ENCODE measurements at regions of chr5 and their contacts with region 1.

Region 1: GRCh38 chr5:35777358-35778087 is 79.2 kb upstream of the IL7R start:
- DNase-seq: peak; percentile 50 to 90 (median 68)
- ATAC-seq: peak; percentile 63
- H3K4me3 ChIP-seq: peak overlapping the region; percentile 7
- H3K4me3 Mint-ChIP-seq: peak overlapping the region; percentile 77
- H3K27ac ChIP-seq: peak overlapping the region in 1 of 2 donors; percentile 19
- H3K27ac Mint-ChIP-seq: peak overlapping the region; percentile 84
- H3K4me1 ChIP-seq: peaks cover 32% of the 10 kb centered on the region
- H3K4me1 Mint-ChIP-seq: peaks cover 74% of the 10 kb centered on the region
- H3K27me3 ChIP-seq: no peaks in the 10 kb centered on the region
- H3K27me3 Mint-ChIP-seq: no peaks in the 10 kb centered on the region
- CTCF ChIP-seq: peak; percentile 87

Region 2: DNA sequence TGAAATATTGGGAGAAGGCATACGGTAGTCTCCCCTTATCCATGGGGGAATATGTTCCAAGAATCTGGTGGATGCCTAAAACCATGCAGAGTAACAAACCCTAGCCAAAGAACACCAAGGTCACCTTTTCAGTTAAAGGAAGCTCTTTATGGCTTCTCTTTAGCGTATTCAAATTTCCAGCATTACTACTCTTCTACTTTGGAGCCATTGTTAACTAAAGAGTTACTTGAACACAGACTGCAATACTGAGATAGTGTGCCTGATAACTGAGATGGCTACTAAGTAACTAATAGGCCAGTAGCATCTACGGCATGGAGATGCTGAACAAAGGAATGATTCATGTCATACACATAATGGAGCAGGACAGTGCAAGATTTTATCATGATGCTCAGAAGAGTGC is 244.4 kb before region 1 on chr5:
- CTCF ChIA-PET with region 1: no interaction called
- POLR2A ChIA-PET with region 1: no interaction called
- intact Hi-C with region 1: no loop called
- DNase-seq: no peak
- ATAC-seq: no peak
- H3K4me3 ChIP-seq: no peak overlapping the region
- H3K4me3 Mint-ChIP-seq: no peak overlapping the region
- H3K27ac ChIP-seq: no peak overlapping the region
- H3K27ac Mint-ChIP-seq: no peak overlapping the region
- H3K4me1 ChIP-seq: no peaks in the 10 kb centered on the region
- H3K4me1 Mint-ChIP-seq: no peaks in the 10 kb centered on the region
- H3K27me3 ChIP-seq: no peaks in the 10 kb centered on the region
- H3K27me3 Mint-ChIP-seq: peaks cover 6% of the 10 kb centered on the region
- CTCF ChIP-seq: no peak

Region 3: GRCh38 chr5:35627616-35628015 is 149.9 kb before region 1 on chr5:
- CTCF ChIA-PET with region 1: no interaction called
- POLR2A ChIA-PET with region 1: no interaction called
- intact Hi-C with region 1: no loop called
- DNase-seq: no peak
- ATAC-seq: no peak
- H3K4me3 ChIP-seq: no peak overlapping the region
- H3K4me3 Mint-ChIP-seq: no peak overlapping the region
- H3K27ac ChIP-seq: no peak overlapping the region
- H3K27ac Mint-ChIP-seq: no peak overlapping the region
- H3K4me1 ChIP-seq: no peaks in the 10 kb centered on the region
- H3K4me1 Mint-ChIP-seq: peaks cover 5% of the 10 kb centered on the region
- H3K27me3 ChIP-seq: no peaks in the 10 kb centered on the region
- H3K27me3 Mint-ChIP-seq: no peaks in the 10 kb centered on the region
- CTCF ChIP-seq: no peak

Region 4: GRCh38 chr5:35672995-35673394 is 104.5 kb before region 1 on chr5:
- CTCF ChIA-PET with region 1: interaction called, 3 read pairs
- POLR2A ChIA-PET with region 1: interaction called, 3 read pairs
- intact Hi-C with region 1: loop called in 1 of 2 experiments (anchors 5 kb)
- DNase-seq: peak in 12 of 14 experiments; percentile 3 to 70 (median 23)
- ATAC-seq: peak; percentile 74
- H3K4me3 ChIP-seq: no peak overlapping the region
- H3K4me3 Mint-ChIP-seq: peak overlapping the region; percentile 63
- H3K27ac ChIP-seq: peak overlapping the region in 1 of 2 donors; percentile 25
- H3K27ac Mint-ChIP-seq: peak overlapping the region; percentile 93
- H3K4me1 ChIP-seq: peaks cover 10% of the 10 kb centered on the region
- H3K4me1 Mint-ChIP-seq: peaks cover 78% of the 10 kb centered on the region
- H3K27me3 ChIP-seq: no peaks in the 10 kb centered on the region
- H3K27me3 Mint-ChIP-seq: no peaks in the 10 kb centered on the region
- CTCF ChIP-seq: no peak

Region 5: GRCh38 chr5:35717718-35718117 is 59.8 kb before region 1 on chr5:
- CTCF ChIA-PET with region 1: no interaction called
- POLR2A ChIA-PET with region 1: no interaction called
- intact Hi-C with region 1: no loop called
- DNase-seq: peak in 1 of 14 experiments; percentile 7
- ATAC-seq: no peak
- H3K4me3 ChIP-seq: no peak overlapping the region
- H3K4me3 Mint-ChIP-seq: no peak overlapping the region
- H3K27ac ChIP-seq: no peak overlapping the region
- H3K27ac Mint-ChIP-seq: no peak overlapping the region
- H3K4me1 ChIP-seq: no peaks in the 10 kb centered on the region
- H3K4me1 Mint-ChIP-seq: no peaks in the 10 kb centered on the region
- H3K27me3 ChIP-seq: no peaks in the 10 kb centered on the region
- H3K27me3 Mint-ChIP-seq: no peaks in the 10 kb centered on the region
- CTCF ChIP-seq: no peak

Region 6: DNA sequence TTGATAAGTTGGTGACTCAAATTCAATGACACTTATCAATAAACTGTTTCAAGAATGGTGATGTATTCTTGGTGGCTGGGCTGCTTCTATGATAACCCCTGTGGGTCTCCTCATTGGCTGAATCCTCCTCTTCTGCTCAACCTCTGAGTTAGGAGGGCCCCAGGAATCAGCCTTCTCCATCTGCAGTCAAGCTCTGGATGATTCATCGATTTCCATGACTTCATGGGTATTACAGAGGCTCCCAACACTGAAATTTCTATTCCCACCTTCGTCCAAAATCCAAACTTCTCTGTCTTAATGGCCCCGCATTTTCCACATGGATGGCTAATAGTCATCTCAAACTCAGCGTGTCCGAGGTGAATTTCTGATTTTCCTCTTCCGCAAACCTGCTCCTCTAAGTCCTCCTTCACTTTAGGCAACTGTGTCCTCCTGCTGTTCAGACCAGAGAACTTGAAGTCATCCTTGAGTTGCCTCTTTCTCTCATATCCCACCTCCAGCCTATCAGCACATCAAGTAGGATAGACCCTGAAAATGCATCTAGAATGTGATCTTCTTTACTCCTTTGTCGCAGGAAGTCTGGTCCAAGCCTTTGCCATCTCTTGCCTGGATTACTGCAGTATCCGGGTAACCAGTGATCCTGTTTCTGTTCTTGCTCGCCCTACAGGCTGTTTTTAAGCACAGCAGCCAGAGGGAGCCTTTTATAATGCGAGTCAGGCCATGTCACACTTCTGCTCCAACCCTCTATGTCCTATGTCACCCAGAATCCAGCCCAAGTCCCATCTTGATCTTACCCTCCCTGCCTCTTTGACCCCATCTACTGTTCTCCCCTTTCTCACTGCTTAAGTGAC is 37.8 kb after region 1 on chr5:
- CTCF ChIA-PET with region 1: interaction called, 20 read pairs
- POLR2A ChIA-PET with region 1: interaction called, 71 read pairs
- intact Hi-C with region 1: loop called in 1 of 2 experiments (anchors 5 kb)
- DNase-seq: peak in 4 of 14 experiments; percentile 47 to 75 (median 69)
- ATAC-seq: peak; percentile 27
- H3K4me3 ChIP-seq: no peak overlapping the region
- H3K4me3 Mint-ChIP-seq: no peak overlapping the region
- H3K27ac ChIP-seq: peak overlapping the region; percentile 8 to 59
- H3K27ac Mint-ChIP-seq: no peak overlapping the region
- H3K4me1 ChIP-seq: peaks cover 65% of the 10 kb centered on the region
- H3K4me1 Mint-ChIP-seq: peaks cover 39% of the 10 kb centered on the region
- H3K27me3 ChIP-seq: no peaks in the 10 kb centered on the region
- H3K27me3 Mint-ChIP-seq: no peaks in the 10 kb centered on the region
- CTCF ChIP-seq: peak; percentile 64

Region 7: GRCh38 chr5:35857606-35858205 is 80.2 kb after region 1 on chr5:
- CTCF ChIA-PET with region 1: interaction called, 19 read pairs
- POLR2A ChIA-PET with region 1: interaction called, 384 read pairs
- intact Hi-C with region 1: loop called (anchors 1 to 2 kb)
- DNase-seq: peak in 2 of 14 experiments; percentile 49 to 53
- ATAC-seq: no peak
- H3K4me3 ChIP-seq: peak overlapping the region; percentile 88
- H3K4me3 Mint-ChIP-seq: peak overlapping the region; percentile 93
- H3K27ac ChIP-seq: peak overlapping the region; percentile 97 to 98
- H3K27ac Mint-ChIP-seq: peak overlapping the region; percentile 99
- H3K4me1 ChIP-seq: peaks cover 31% of the 10 kb centered on the region
- H3K4me1 Mint-ChIP-seq: peaks cover 73% of the 10 kb centered on the region
- H3K27me3 ChIP-seq: no peaks in the 10 kb centered on the region
- H3K27me3 Mint-ChIP-seq: no peaks in the 10 kb centered on the region
- CTCF ChIP-seq: no peak

Region 8: DNA sequence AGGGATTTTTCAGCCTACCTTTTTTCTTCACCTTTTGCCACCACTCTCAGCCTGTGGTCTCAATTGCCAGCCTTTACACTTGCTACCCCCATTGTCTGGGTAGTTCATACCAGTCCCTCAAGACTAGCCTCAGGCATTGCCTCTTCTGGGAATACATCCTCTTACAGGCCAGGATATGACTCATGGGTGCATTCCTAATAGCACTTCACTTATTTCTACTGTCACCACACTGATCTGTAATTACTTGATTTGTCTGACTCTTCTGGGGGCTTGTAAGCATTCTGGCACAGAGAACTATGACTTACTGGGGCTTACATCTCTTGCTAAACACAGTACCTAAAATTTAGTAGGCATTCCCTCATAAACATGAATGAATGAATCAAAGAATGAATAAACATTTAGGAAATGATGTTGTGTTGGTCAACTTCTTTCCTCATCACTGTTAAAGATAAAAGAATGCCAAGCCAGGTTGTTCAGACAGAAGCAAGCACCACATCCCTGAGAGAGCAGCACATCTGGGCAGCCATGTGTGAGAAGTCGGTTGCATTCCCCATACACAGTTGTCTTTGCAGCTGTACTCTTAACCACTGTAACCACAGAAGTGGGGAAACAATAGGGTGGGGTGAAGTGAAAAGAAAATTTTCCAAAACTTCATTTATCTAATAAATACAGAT is 106.7 kb after region 1 on chr5:
- CTCF ChIA-PET with region 1: interaction called, 3 read pairs
- POLR2A ChIA-PET with region 1: interaction called, 104 read pairs
- intact Hi-C with region 1: no loop called
- DNase-seq: peak in 2 of 14 experiments; percentile 50 to 51
- ATAC-seq: peak; percentile 27
- H3K4me3 ChIP-seq: no peak overlapping the region
- H3K4me3 Mint-ChIP-seq: no peak overlapping the region
- H3K27ac ChIP-seq: no peak overlapping the region
- H3K27ac Mint-ChIP-seq: peak overlapping the region; percentile 55
- H3K4me1 ChIP-seq: peaks cover 21% of the 10 kb centered on the region
- H3K4me1 Mint-ChIP-seq: peaks cover 55% of the 10 kb centered on the region
- H3K27me3 ChIP-seq: no peaks in the 10 kb centered on the region
- H3K27me3 Mint-ChIP-seq: no peaks in the 10 kb centered on the region
- CTCF ChIP-seq: no peak

Region 9: GRCh38 chr5:36397901-36398536 is 620.5 kb after region 1 on chr5:
- CTCF ChIA-PET with region 1: no interaction called
- POLR2A ChIA-PET with region 1: no interaction called
- intact Hi-C with region 1: no loop called
- DNase-seq: no peak
- ATAC-seq: no peak
- H3K4me3 ChIP-seq: no peak overlapping the region
- H3K4me3 Mint-ChIP-seq: no peak overlapping the region
- H3K27ac ChIP-seq: no peak overlapping the region
- H3K27ac Mint-ChIP-seq: no peak overlapping the region
- H3K4me1 ChIP-seq: no peaks in the 10 kb centered on the region
- H3K4me1 Mint-ChIP-seq: no peaks in the 10 kb centered on the region
- H3K27me3 ChIP-seq: no peaks in the 10 kb centered on the region
- H3K27me3 Mint-ChIP-seq: peaks cover 4% of the 10 kb centered on the region
- CTCF ChIP-seq: no peak

Measured in CD4-positive, alpha-beta T cell (primary cell).